ENCODE measurements at regions of chr4 and their contacts with region 1.

Region 1: DNA sequence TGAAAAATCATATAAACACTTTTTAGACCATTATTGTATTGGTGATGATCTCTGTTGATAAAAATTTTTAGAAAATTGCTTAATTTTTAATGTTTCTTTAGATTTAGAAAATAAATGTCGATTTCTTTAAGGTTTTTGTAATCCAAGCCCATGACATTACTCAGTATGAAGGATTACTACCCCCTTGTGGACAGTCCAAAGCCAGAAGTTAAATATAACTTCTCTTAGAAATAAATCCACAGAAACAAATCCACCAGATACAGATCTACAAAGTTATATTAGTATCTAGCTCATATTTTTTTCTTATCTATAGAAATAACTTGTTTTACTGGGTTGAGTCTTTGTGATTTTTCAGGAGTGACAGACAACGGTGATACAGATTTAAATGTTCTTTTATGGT is 18.9 kb downstream of the TIFA start:
- DNase-seq: peak; percentile 12
- H3K4me3 ChIP-seq: no peak overlapping the region
- H3K27ac ChIP-seq: no peak overlapping the region
- H3K4me1 ChIP-seq: peaks cover 0 to 2% of the 10 kb centered on the region in 2 experiments; a peak in 1 of 4 replicates
- H3K27me3 ChIP-seq: no peaks in the 10 kb centered on the region
- CTCF ChIP-seq: peak; percentile 70
- EP300 ChIP-seq: no peak
- RAD21 ChIP-seq: peak; percentile 51

Region 2: GRCh38 chr4:112147697-112148096 is 119.1 kb before region 1 on chr4:
- CTCF ChIA-PET with region 1: no interaction called
- POLR2A ChIA-PET with region 1: no interaction called
- DNase-seq: no peak
- H3K4me3 ChIP-seq: no peak overlapping the region
- H3K27ac ChIP-seq: no peak overlapping the region
- H3K4me1 ChIP-seq: peaks cover 2 to 3% of the 10 kb centered on the region in 2 experiments; a peak in 3 of 4 replicates
- H3K27me3 ChIP-seq: no peaks in the 10 kb centered on the region
- CTCF ChIP-seq: no peak
- EP300 ChIP-seq: no peak
- RAD21 ChIP-seq: no peak

Region 3: GRCh38 chr4:112251019-112251643 is 15.7 kb before region 1 on chr4:
- CTCF ChIA-PET with region 1: interaction called, 12 read pairs
- POLR2A ChIA-PET with region 1: no interaction called
- DNase-seq: no peak
- H3K4me3 ChIP-seq: no peak overlapping the region
- H3K27ac ChIP-seq: no peak overlapping the region
- H3K4me1 ChIP-seq: peaks cover 0 to 5% of the 10 kb centered on the region in 2 experiments; a peak in 2 of 4 replicates
- H3K27me3 ChIP-seq: no peaks in the 10 kb centered on the region
- CTCF ChIP-seq: no peak
- EP300 ChIP-seq: no peak
- RAD21 ChIP-seq: no peak

Region 4: DNA sequence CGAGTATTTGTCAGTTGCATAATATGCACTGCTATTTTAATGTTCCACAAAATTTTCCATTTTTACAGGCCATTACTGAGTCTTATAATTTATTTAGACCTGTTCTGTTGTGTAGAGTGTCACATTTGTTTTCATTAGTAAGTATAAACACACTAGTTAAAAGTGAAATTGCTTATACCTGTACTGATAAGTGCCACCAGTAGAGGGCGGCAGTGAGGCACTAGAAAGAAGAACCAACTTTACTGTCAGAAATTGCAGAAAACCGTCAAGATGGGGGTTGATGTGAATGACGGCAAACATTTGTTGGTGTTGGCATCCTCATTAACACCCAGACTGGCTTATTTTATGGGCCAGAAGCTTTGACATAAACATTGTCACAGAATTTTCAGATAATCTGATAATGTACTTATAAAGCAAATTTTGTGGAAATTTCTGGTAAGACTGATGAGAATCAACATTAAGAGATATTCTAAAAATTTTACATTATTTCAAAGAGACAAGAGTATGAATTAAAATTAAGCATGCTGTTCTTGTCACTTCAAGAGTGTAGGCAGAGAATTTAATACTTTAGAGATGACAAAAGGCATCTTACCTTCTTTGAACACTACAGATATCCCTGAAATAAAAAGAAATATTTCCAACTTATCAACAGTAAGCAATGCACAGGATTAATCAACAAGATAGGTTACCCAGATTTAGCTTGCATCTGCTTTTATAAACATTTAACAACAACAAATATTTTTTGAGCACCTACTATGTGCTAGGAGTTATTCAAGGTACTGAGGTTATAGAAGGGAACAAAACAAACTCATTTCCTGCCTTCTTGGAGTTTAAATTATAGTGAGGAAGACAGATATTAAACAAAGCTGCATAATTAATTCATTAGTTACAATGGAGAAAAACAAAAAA is 55.2 kb after region 1 on chr4:
- CTCF ChIA-PET with region 1: no interaction called
- POLR2A ChIA-PET with region 1: no interaction called
- DNase-seq: peak; percentile 44
- H3K4me3 ChIP-seq: no peak overlapping the region; a peak in 2 of 4 replicates
- H3K27ac ChIP-seq: no peak overlapping the region
- H3K4me1 ChIP-seq: peaks cover 0 to 12% of the 10 kb centered on the region in 2 experiments; a peak in 2 of 4 replicates
- H3K27me3 ChIP-seq: no peaks in the 10 kb centered on the region
- CTCF ChIP-seq: peak; percentile 98
- EP300 ChIP-seq: no peak
- RAD21 ChIP-seq: peak; percentile 71

Region 5: DNA sequence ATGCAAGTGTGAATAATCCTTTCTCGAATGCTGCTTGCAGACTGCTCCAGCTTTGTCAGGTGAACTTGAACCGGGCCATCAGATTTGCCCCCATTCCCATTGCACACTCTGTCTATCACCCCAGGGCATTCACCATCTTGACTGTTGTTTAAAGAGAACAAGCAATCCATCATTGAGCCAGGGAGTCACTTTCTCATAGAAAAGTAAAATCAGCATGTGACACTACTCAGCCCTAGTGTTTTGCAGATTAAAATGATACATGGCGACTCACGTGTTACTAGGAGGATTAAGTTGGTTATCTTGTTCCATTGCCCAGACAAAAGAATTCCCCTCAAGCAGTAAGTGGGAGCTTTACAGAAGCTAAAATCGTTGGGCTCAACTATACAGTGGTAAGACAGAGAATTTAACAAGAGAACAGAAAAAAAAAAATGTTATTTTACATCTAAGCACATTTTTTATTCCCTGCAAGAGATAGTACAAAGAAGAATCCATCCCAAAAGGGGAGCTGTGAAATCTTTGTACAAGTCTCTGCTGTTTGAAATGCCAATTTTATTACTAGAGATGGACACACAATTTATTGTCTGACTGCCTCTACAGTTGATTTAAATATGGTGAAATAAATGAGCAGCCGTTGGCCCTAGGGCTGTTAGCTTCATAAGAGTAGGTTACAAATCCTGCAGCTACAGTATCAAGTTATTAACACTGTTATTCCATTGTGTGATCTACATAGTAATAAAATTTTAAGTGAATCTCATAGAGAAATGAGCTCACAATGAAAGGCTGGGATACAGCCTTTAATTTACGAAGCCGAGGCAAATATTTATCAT is 181.7 kb after region 1 on chr4:
- CTCF ChIA-PET with region 1: no interaction called
- POLR2A ChIA-PET with region 1: no interaction called
- DNase-seq: peak; percentile 4
- H3K4me3 ChIP-seq: no peak overlapping the region
- H3K27ac ChIP-seq: no peak overlapping the region
- H3K4me1 ChIP-seq: no peaks in the 10 kb centered on the region; a peak in 1 of 4 replicates
- H3K27me3 ChIP-seq: no peaks in the 10 kb centered on the region
- CTCF ChIP-seq: no peak
- EP300 ChIP-seq: no peak
- RAD21 ChIP-seq: no peak

Region 6: GRCh38 chr4:113169368-113169767 is 902.5 kb after region 1 on chr4:
- CTCF ChIA-PET with region 1: no interaction called
- POLR2A ChIA-PET with region 1: no interaction called
- DNase-seq: no peak
- H3K4me3 ChIP-seq: no peak overlapping the region
- H3K27ac ChIP-seq: no peak overlapping the region
- H3K4me1 ChIP-seq: peaks cover 0 to 9% of the 10 kb centered on the region in 2 experiments; a peak in 2 of 4 replicates
- H3K27me3 ChIP-seq: no peaks in the 10 kb centered on the region
- CTCF ChIP-seq: no peak
- EP300 ChIP-seq: no peak
- RAD21 ChIP-seq: no peak

Measured in SK-N-SH (cell line).